ENCODE measurements at regions of chr2 and their contacts with region 1.

Region 1: GRCh38 chr2:73926493-73927338 is at the start of gene DGUOK:
- DNase-seq: peak; percentile 93 to 99
- ATAC-seq: peak; percentile 100
- H3K4me3 ChIP-seq: peak within 1 kb of the TSS; percentile 68 to 90 (median 78)
- H3K27ac ChIP-seq: peak within 1 kb of the TSS; percentile 81 to 98 (median 96)
- H3K4me1 ChIP-seq: peaks cover 0 to 53% (median 37%) of the 10 kb centered on the region in 9 donors
- H3K27me3 ChIP-seq: peaks cover 0 to 6% (median 0%) of the 10 kb centered on the region in 7 donors
- CTCF ChIP-seq: no peak
- total RNA-seq, gene DGUOK: 18.7 to 29.4 (median 22.6) TPM

Region 2: DNA sequence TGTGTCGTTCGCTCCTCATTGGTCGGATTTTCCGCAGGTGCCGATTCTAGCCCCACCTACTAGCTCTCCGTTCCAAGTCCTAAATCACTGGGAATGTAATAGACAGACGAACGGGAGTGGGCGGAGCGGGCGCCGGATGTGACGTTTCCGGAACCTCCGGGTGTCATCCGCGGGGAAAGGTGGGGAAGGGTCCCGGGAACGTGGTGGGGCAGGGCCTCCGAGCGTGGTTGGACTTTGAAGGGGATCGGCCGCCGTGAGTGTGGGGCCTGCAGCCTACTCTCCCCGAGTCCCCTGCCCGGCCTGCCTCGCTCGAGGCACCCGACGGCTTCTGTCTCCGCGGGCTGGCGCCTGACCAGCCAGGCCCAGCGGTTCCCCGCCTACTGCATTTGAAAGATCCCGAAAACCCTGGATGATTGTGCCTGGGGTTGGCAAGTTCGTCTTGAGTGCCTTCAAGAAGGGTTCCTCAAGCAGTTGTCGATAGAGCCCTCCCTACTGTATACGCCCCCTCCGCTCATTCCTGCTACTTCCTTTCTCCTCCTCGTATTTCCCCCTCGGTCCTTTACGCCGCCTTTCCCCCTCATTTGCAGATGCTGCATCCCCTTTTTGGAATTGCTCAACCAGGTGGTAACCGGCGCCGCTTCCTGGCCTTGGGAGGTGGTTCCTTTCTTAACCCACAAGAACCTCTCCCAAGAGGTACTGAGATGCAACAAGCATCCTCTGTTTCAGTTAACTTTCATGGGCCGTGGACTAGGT is 97.7 kb before region 1 on chr2 and contains the start of gene STAMBP:
- intact Hi-C with region 1: loop called in 2 of 10 experiments (anchors 10 kb)
- DNase-seq: peak; percentile 95 to 98
- ATAC-seq: peak; percentile 96 to 99 (median 99)
- H3K4me3 ChIP-seq: peak within 1 kb of the TSS; percentile 52 to 90 (median 80)
- H3K27ac ChIP-seq: peak within 1 kb of the TSS; percentile 65 to 99 (median 94)
- H3K4me1 ChIP-seq: peaks cover 0 to 41% (median 24%) of the 10 kb centered on the region in 9 donors
- H3K27me3 ChIP-seq: no peaks in the 10 kb centered on the region
- CTCF ChIP-seq: no peak
- total RNA-seq, gene STAMBP: 24.6 to 37.5 (median 33.0) TPM

Region 3: GRCh38 chr2:73870084-73870483 is 56.6 kb before region 1 on chr2:
- intact Hi-C with region 1: loop called in 1 of 10 experiments (anchors 5 kb)
- DNase-seq: peak in 1 of 2 donors; percentile 90
- ATAC-seq: peak; percentile 87 to 99 (median 96)
- H3K4me3 ChIP-seq: peak overlapping the region in 1 of 10 donors; percentile 1
- H3K27ac ChIP-seq: peak overlapping the region in 9 of 10 donors; percentile 4 to 84 (median 67)
- H3K4me1 ChIP-seq: peaks cover 0 to 22% (median 16%) of the 10 kb centered on the region in 9 donors
- H3K27me3 ChIP-seq: no peaks in the 10 kb centered on the region
- CTCF ChIP-seq: no peak

Region 4: DNA sequence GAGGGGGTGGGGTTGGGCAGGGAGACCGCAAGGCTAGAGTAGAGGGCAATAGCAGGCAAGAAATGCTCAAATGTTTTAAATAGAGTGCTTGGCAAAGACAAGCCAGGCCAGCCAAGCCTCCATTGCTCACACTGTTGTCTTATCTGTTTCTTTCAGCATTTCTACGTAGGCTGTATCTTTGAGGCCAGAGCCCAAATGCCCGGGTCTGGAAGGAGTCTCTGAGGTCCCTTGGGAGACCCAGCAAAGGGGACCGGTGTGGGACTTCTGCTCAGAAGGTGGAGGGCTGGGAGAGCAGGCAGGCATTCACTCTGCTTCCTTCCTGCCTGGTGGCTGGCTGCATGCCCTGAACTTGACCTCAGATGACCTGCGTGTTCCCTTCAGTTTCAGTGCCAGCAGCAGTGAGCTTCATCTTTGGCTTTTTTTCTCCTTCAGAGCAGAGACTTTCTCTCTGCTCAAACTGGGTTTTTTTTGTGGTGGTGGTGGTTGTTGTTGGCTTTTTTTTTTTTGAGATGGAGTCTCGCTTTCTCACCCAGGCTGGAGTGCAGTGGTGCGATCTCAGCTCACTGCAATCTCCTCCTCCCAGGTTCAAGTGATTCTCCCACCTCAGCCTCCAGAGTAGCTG is 44.2 kb after region 1 on chr2:
- intact Hi-C with region 1: loop called in 1 of 10 experiments (anchors 10 kb)
- DNase-seq: peak; percentile 82 to 85
- ATAC-seq: peak; percentile 86 to 94 (median 92)
- H3K4me3 ChIP-seq: peak overlapping the region in 3 of 10 donors; percentile 2 to 4 (median 4)
- H3K27ac ChIP-seq: peak overlapping the region in 9 of 10 donors; percentile 38 to 76 (median 59)
- H3K4me1 ChIP-seq: peaks cover 3 to 62% (median 30%) of the 10 kb centered on the region in 9 donors
- H3K27me3 ChIP-seq: no peaks in the 10 kb centered on the region
- CTCF ChIP-seq: no peak

Region 5: GRCh38 chr2:73985308-73986084 is 58.8 kb after region 1 on chr2:
- intact Hi-C with region 1: loop called in 4 of 10 experiments (anchors 5 to 10 kb)
- DNase-seq: peak; percentile 54 to 65
- ATAC-seq: peak in 6 of 8 donors; percentile 5 to 27 (median 9)
- H3K4me3 ChIP-seq: peak overlapping the region; percentile 34 to 67 (median 61)
- H3K27ac ChIP-seq: peak overlapping the region in 8 of 10 donors; percentile 49 to 95 (median 74)
- H3K4me1 ChIP-seq: peaks cover 12 to 78% (median 66%) of the 10 kb centered on the region in 9 donors
- H3K27me3 ChIP-seq: no peaks in the 10 kb centered on the region
- CTCF ChIP-seq: no peak

Region 6: DNA sequence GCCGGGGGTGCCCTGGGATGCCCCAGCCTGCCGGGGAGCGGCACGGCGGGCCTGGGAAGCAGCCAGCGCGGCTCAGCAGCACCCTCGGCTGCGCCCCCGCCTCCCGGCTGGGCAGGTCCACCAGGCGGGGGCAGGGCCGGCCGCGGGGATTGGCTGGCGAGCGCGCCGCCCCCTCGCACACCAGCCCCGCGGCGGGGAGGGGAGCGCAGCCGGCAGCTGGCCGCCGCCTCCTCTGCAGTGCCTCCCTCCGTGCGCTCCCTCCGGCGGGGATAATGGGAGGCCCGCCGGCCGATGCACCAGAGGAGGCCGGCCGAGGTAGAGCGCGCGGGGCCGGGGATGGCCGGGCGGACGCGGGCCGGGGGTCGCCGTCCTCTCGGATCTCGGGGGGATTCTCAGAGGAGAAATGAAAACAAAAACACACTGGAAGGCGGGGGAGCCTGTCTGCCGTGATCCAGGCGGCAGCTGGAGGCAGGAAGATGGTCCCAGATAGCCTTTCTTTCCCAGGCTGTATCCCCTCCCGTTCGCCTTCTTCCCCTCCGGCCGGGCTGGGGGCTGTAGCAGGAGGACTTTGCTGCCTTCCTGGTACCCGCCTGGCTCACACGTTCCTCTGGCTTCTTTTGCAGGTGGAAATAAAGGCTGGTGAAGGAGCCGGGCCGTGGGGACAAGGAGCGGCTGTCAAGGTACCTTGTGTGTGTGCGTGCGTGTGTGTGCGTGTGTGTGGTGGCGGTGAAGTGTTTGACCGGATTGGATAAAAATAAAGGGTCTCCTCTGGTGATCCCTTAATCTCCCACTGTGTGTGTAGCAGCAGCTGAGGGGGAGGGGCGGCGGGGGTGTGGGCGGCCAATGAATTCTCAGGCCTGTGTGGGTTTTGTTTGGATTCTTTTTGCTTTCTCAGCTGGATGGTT is 76.0 kb after region 1 on chr2:
- intact Hi-C with region 1: loop called in 2 of 10 experiments (anchors 5 to 10 kb)
- DNase-seq: peak; percentile 78 to 88
- ATAC-seq: peak; percentile 95 to 98 (median 96)
- H3K4me3 ChIP-seq: peak overlapping the region in 9 of 10 donors; percentile 58 to 82 (median 71)
- H3K27ac ChIP-seq: peak overlapping the region in 8 of 10 donors; percentile 36 to 76 (median 59)
- H3K4me1 ChIP-seq: peaks cover 23 to 76% (median 68%) of the 10 kb centered on the region in 9 donors
- H3K27me3 ChIP-seq: no peaks in the 10 kb centered on the region
- CTCF ChIP-seq: peak in 4 of 9 donors; percentile 4 to 40 (median 22)

Region 7: DNA sequence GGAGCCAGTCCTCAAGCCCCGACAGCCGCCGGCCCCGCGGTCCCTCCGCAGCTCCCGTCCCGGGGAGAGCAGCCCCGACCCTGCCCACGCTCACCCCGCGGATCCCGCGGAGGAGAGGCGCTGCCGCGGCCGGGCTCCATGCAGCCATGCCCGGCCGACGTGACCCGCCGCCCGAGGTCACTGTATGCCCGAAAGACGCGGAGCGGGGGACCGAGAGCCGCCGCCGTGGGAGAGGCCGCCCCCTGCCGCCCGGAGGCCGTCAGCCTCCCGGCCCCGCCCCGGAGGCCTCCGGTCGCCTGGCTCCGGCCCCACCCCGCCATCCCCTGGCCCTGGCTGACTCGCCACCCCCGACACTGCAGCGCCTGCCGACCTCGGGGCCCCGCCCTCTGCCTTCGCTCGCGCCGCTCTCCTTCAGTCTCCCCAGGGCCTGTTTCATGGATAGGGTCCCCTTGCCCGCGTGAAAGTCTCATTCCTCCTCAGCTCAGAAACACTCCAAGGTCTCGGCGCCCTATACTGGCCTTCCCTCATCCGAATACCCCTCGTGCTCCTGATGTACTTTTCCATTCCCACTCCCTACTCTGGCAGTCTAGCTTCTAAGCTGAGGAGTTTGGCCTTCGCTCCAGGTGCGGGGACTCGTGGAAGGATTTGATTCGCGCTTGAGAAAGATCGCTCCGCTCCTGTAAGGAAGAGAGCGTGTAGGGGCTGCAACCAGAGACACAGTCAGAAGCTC is 221.2 kb after region 1 on chr2 and contains the start of gene BOLA3:
- intact Hi-C with region 1: loop called in 1 of 10 experiments (anchors 10 kb)
- DNase-seq: peak; percentile 85 to 90
- ATAC-seq: peak; percentile 96 to 99 (median 98)
- H3K4me3 ChIP-seq: peak within 1 kb of the TSS; percentile 66 to 97 (median 86)
- H3K27ac ChIP-seq: peak within 1 kb of the TSS; percentile 14 to 83 (median 77)
- H3K4me1 ChIP-seq: peaks cover 10 to 30% (median 23%) of the 10 kb centered on the region in 9 donors
- H3K27me3 ChIP-seq: no peaks in the 10 kb centered on the region
- CTCF ChIP-seq: peak; percentile 56 to 93 (median 88)
- total RNA-seq, gene BOLA3: 63.9 to 117 (median 82.3) TPM

Measured in heart right ventricle (tissue), 16 donors.